PC-3 (cell line): ENCODE measurements at regions of chr10 and their contacts with region 1.

Region 1: GRCh38 chr10:93837822-93838221 is 56.0 kb upstream of the SLC35G1 start:
- DNase-seq: no peak
- ATAC-seq: no peak
- H3K4me3 ChIP-seq: no peak overlapping the region
- H3K27ac ChIP-seq: no peak overlapping the region
- H3K4me1 ChIP-seq: no peaks in the 10 kb centered on the region
- H3K27me3 ChIP-seq: no peaks in the 10 kb centered on the region
- CTCF ChIP-seq: no peak

Region 2: DNA sequence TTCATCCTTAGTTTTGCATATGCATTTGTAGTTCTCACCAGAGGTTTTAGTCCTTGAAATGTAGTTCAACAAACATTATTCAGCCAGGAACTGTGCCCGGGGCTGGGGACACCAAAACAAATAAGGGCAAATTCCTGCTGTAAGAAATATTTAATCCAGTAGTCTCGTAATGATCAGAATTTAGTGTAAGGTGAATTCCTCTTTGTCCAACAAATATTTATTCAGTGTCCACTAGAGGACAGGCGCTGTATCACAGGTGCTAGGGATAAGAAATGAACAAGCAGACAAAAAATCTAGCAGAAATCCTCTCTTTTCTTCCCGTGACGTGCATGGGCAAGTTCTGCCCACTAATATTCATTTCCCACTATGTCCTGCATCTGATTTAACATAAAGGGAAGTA is 62.5 kb before region 1 on chr10:
- CTCF ChIA-PET with region 1: no interaction called
- POLR2A ChIA-PET with region 1: no interaction called
- intact Hi-C with region 1: no loop called
- DNase-seq: peak; percentile 10
- ATAC-seq: peak; percentile 48
- H3K4me3 ChIP-seq: no peak overlapping the region
- H3K27ac ChIP-seq: no peak overlapping the region
- H3K4me1 ChIP-seq: no peaks in the 10 kb centered on the region
- H3K27me3 ChIP-seq: no peaks in the 10 kb centered on the region
- CTCF ChIP-seq: peak; percentile 29; the same call in 1 of the 2 replicates

Region 3: GRCh38 chr10:93826355-93826754 is 11.5 kb before region 1 on chr10:
- CTCF ChIA-PET with region 1: no interaction called
- POLR2A ChIA-PET with region 1: no interaction called
- intact Hi-C with region 1: no loop called
- DNase-seq: no peak
- ATAC-seq: no peak
- H3K4me3 ChIP-seq: no peak overlapping the region
- H3K27ac ChIP-seq: no peak overlapping the region
- H3K4me1 ChIP-seq: no peaks in the 10 kb centered on the region
- H3K27me3 ChIP-seq: no peaks in the 10 kb centered on the region
- CTCF ChIP-seq: no peak

Region 4: GRCh38 chr10:94409021-94409657 is 571.3 kb after region 1 on chr10:
- CTCF ChIA-PET with region 1: interaction called, 11 read pairs
- POLR2A ChIA-PET with region 1: no interaction called
- intact Hi-C with region 1: no loop called
- DNase-seq: no peak
- ATAC-seq: no peak
- H3K4me3 ChIP-seq: no peak overlapping the region
- H3K27ac ChIP-seq: no peak overlapping the region
- H3K4me1 ChIP-seq: peaks cover 5% of the 10 kb centered on the region
- H3K27me3 ChIP-seq: no peaks in the 10 kb centered on the region
- CTCF ChIP-seq: no peak